Breast epithelium (tissue), 4 donors: ENCODE measurements at regions of chr4 and their contacts with region 1.

Region 1: GRCh38 chr4:85734424-85734831 is 259.5 kb downstream of the ARHGAP24 start:
- DNase-seq: no peak
- H3K4me3 ChIP-seq: no peak overlapping the region
- H3K27ac ChIP-seq: no peak overlapping the region
- H3K4me1 ChIP-seq: no peaks in the 10 kb centered on the region
- H3K27me3 ChIP-seq: no peaks in the 10 kb centered on the region
- CTCF ChIP-seq: no peak
- POLR2A ChIP-seq: no peak

Region 2: DNA sequence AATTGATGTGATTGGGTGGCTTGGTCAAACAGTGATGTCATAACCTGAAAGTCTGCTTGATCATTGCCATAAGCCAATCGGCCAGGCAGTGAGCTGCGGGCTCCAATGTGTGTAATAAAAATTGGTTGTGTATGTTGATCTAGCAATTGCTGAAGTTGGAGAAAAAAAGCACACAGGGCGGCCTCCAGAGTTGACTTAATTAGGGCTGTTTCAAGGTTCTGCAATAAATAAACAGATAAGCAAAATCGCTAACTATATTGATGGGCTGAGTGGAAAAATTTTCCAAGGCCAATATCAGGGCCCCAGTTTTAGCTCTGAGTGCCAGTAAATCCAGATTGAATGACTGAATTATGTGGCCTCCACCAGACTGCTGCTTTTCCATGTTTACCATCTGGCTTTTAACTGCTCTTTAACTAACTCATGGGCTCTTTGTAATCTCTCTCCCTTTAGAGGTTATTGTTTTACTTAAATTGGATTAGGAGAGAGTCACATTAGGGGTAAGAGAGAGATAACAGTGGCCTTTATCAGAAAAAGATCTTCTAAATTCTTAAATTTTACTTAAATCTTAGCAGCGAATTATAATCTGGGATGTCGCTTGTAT is 607.3 kb before region 1 on chr4:
- intact Hi-C with region 1: no loop called
- DNase-seq: no peak
- H3K4me3 ChIP-seq: no peak overlapping the region
- H3K27ac ChIP-seq: no peak overlapping the region
- H3K4me1 ChIP-seq: no peaks in the 10 kb centered on the region
- H3K27me3 ChIP-seq: no peaks in the 10 kb centered on the region
- CTCF ChIP-seq: no peak
- POLR2A ChIP-seq: no peak

Region 3: DNA sequence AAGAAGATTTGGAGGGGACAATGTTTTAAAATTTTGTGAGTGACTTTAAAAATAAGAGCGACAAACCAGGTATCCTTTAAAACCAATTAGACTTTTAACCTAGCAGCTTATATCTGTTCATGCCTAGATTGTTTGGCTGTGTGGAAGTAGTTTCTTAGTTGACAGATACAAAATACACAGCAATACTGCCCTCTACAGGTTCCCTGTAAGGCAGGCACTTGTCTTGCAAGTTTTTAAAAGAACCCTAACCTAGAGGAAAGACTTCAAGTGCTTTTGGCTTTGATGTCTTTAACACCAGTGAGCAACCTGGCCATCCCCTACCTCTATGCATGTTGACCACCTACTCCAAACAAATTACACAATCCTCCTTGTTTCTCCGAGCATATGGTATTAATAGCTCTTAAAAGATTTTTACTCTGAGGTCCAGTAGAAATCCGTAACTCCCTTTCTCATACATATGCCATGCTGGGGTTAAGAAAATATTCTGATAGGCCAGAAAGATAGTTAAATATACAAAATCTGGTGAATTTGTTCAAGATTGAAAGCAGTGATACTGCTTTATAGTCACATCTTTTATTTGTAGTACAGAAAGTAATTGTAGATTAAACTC is 13.6 kb after region 1 on chr4:
- intact Hi-C with region 1: no loop called
- DNase-seq: no peak
- H3K4me3 ChIP-seq: no peak overlapping the region
- H3K27ac ChIP-seq: no peak overlapping the region
- H3K4me1 ChIP-seq: no peaks in the 10 kb centered on the region
- H3K27me3 ChIP-seq: no peaks in the 10 kb centered on the region
- CTCF ChIP-seq: peak; percentile 57 to 64 (median 63)
- POLR2A ChIP-seq: no peak

Region 4: GRCh38 chr4:87120411-87121199 is 1386.2 kb after region 1 on chr4:
- intact Hi-C with region 1: loop called (anchors 5 kb)
- DNase-seq: peak; percentile 67 to 85
- H3K4me3 ChIP-seq: peak overlapping the region in 2 of 3 donors; percentile 34 to 49
- H3K27ac ChIP-seq: peak overlapping the region; percentile 76 to 82
- H3K4me1 ChIP-seq: peaks cover 0 to 7% of the 10 kb centered on the region in 2 donors
- H3K27me3 ChIP-seq: no peaks in the 10 kb centered on the region
- CTCF ChIP-seq: no peak
- POLR2A ChIP-seq: no peak